Activated B cell treated with CpG ODN at 0.5 μM for 24 hours (primary cell): ENCODE measurements at regions of chr7 and their contacts with region 1.

Region 1: GRCh38 chr7:70856866-70857630 is 274.9 kb upstream of the GALNT17 start:
- DNase-seq: peak; percentile 41
- ATAC-seq: no peak
- H3K4me3 Mint-ChIP-seq: no peak overlapping the region
- H3K27ac Mint-ChIP-seq: no peak overlapping the region
- H3K4me1 Mint-ChIP-seq: no peaks in the 10 kb centered on the region
- H3K27me3 Mint-ChIP-seq: no peaks in the 10 kb centered on the region
- CTCF ChIP-seq: peak; percentile 59

Region 2: DNA sequence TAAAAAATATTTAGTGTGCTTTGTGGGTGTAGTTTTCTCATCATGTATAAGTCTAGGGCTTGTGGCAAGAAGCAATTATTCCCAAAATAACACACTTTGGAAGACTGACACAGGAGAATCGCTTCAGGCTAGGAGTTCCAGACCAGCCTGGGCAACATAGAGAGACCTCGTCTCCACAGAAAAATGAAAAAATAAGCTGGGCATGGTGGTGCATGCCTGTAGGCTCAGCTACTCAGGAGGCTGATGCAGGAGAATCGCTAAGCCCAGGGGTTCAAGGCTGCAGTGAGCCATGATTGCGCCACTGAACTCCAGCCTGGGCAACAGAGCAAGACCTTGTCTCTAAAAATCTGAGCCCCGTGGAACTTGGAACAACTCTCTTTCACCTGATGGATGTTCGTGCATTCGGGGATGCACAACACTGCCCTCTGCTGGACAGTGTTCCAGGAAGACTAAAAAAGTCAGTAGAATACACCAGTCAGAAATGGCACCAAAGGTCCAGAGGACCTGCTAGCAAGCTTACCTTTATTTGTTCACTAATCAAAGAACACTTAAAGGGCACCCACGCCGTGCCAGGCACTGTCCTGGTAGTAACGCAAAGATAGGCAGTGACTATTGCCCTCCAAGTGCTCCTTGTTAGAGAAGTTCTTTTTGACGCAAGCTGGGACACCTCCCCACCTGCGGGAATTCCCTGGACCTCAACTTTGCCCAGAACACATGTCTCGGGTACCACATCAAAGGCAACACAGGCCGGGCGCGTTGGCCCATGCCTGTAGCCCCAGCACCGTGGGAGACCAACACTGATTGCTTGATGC is 1637.0 kb after region 1 on chr7:
- CTCF ChIA-PET with region 1: no interaction called
- POLR2A ChIA-PET with region 1: no interaction called
- intact Hi-C with region 1: loop called (anchors 10 kb)
- DNase-seq: peak; percentile 18
- ATAC-seq: no peak
- H3K4me3 Mint-ChIP-seq: no peak overlapping the region
- H3K27ac Mint-ChIP-seq: no peak overlapping the region
- H3K4me1 Mint-ChIP-seq: no peaks in the 10 kb centered on the region
- H3K27me3 Mint-ChIP-seq: peaks cover 4% of the 10 kb centered on the region
- CTCF ChIP-seq: no peak